HepG2 (cell line): ENCODE measurements at regions of chrX and their contacts with region 1.

Region 1: GRCh38 chrX:108070891-108071290 is 20.5 kb downstream of the PSMD10 start:
- DNase-seq: no peak
- ATAC-seq: no peak
- H3K4me3 ChIP-seq: no peak overlapping the region
- H3K27ac ChIP-seq: no peak overlapping the region
- H3K4me1 ChIP-seq: no peaks in the 10 kb centered on the region
- H3K27me3 ChIP-seq: no peaks in the 10 kb centered on the region; a peak in 1 of 5 replicates
- CTCF ChIP-seq: no peak
- EP300 ChIP-seq: no peak
- POLR2A ChIP-seq: no peak
- RAD21 ChIP-seq: no peak

Region 2: DNA sequence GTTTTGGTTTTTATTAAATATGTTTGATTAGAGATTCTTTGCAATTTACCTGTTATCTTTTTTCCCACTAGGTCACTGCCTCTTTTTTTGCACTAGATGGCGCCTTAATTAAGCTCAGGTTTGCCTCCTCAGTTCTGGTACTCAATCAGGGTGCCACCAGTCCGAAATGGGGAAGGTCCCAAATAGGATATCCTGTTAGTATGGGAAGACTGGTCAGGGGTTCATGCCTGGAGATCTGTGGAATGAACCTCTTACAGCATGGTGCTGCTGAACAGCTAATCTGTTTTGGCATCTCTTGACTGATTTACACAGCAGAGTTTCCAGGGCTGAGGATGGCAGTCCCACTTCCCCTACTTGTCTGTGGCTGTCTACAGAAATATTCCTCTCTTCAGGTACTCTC is 50.3 kb before region 1 on chrX:
- CTCF ChIA-PET with region 1: interaction called, 25 read pairs
- POLR2A ChIA-PET with region 1: no interaction called
- in situ Hi-C with region 1: loop called (anchors 5 kb)
- intact Hi-C with region 1: loop called (anchors 1 kb)
- DNase-seq: no peak
- ATAC-seq: no peak
- H3K4me3 ChIP-seq: no peak overlapping the region
- H3K27ac ChIP-seq: no peak overlapping the region
- H3K4me1 ChIP-seq: no peaks in the 10 kb centered on the region
- H3K27me3 ChIP-seq: no peaks in the 10 kb centered on the region
- CTCF ChIP-seq: peak; percentile 47
- EP300 ChIP-seq: no peak
- POLR2A ChIP-seq: no peak
- RAD21 ChIP-seq: no peak

Region 3: GRCh38 chrX:108275732-108276131 is 204.8 kb after region 1 on chrX:
- CTCF ChIA-PET with region 1: no interaction called
- POLR2A ChIA-PET with region 1: no interaction called
- in situ Hi-C with region 1: no loop called
- intact Hi-C with region 1: no loop called
- DNase-seq: no peak
- ATAC-seq: no peak
- H3K4me3 ChIP-seq: no peak overlapping the region
- H3K27ac ChIP-seq: no peak overlapping the region
- H3K4me1 ChIP-seq: peaks cover 1% of the 10 kb centered on the region
- H3K27me3 ChIP-seq: no peaks in the 10 kb centered on the region
- CTCF ChIP-seq: no peak
- EP300 ChIP-seq: no peak
- POLR2A ChIP-seq: no peak
- RAD21 ChIP-seq: no peak